ENCODE measurements at regions of chr10 and their contacts with region 1.

Region 1: DNA sequence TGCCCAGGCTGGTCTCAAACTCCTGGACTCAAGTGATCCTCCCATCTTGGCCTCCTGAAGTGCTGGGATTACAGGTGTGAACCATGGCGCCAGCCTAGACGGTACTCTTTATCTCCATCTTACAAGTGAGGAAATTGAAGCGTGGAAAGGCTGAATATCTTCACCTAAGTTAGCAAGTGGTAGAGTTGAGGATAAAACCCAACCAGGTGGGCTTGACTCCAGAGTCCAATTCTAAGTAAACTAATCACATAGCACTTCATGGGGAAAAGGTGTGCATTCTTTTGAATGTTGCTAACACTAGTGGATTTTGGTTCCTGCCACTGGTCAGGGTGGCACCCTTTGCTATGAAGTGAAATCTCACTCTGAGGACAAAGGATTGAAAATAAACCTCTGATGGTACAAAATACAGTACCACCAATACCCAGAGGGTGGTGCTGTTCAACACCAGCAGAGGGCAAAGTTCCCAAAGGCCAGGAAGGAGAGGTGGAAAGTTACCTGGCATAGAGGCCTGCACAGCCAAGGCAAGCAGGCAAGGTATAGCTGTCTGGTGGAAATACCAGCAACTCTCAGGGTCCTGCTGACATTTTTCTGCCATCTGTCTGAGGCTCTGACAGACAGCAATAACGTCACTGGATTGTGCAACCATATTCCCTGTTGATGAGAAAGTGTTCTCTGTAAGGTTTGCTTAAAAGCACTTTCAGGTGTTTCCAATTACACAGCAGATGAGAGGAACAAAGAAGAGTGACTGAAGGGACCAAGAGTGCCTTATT is 17.6 kb downstream of the ZDHHC16 start:
- DNase-seq: peak; percentile 39
- H3K4me3 ChIP-seq: no peak overlapping the region
- H3K27ac ChIP-seq: peak overlapping the region in 3 of 4 donors; percentile 4 to 32 (median 16)
- H3K4me1 ChIP-seq: peaks cover 0 to 7% (median 0%) of the 10 kb centered on the region in 4 donors
- H3K27me3 ChIP-seq: no peaks in the 10 kb centered on the region
- CTCF ChIP-seq: peak; percentile 73 to 81 (median 80)
- EP300 ChIP-seq: no peak
- POLR2A ChIP-seq: no peak

Region 2: GRCh38 chr10:97400665-97401454 is 62.7 kb before region 1 on chr10 and contains the start of gene RRP12:
- in situ Hi-C with region 1: no loop called
- intact Hi-C with region 1: no loop called
- DNase-seq: peak; percentile 90
- H3K4me3 ChIP-seq: peak within 1 kb of the TSS; percentile 59 to 96 (median 63)
- H3K27ac ChIP-seq: peak within 1 kb of the TSS; percentile 77 to 88 (median 85)
- H3K4me1 ChIP-seq: peaks cover 5 to 18% (median 10%) of the 10 kb centered on the region in 4 donors
- H3K27me3 ChIP-seq: no peaks in the 10 kb centered on the region
- CTCF ChIP-seq: peak in 2 of 5 experiments; percentile 11 to 18
- EP300 ChIP-seq: no peak
- POLR2A ChIP-seq: peak; percentile 68
- total RNA-seq, gene RRP12: 5.7 to 14.0 (median 11.5) TPM

Region 3: GRCh38 chr10:97553575-97554031 is 90.1 kb after region 1 on chr10:
- in situ Hi-C with region 1: loop called in 2 of 4 experiments (anchors 10 kb)
- intact Hi-C with region 1: loop called (anchors 5 kb)
- DNase-seq: peak; percentile 52
- H3K4me3 ChIP-seq: no peak overlapping the region
- H3K27ac ChIP-seq: no peak overlapping the region
- H3K4me1 ChIP-seq: no peaks in the 10 kb centered on the region
- H3K27me3 ChIP-seq: no peaks in the 10 kb centered on the region
- CTCF ChIP-seq: peak; percentile 59 to 76 (median 68)
- EP300 ChIP-seq: no peak
- POLR2A ChIP-seq: no peak

Measured in transverse colon (tissue), 4 donors.